Caco-2 (cell line): ENCODE measurements at regions of chr1 and their contacts with region 1.

Region 1: DNA sequence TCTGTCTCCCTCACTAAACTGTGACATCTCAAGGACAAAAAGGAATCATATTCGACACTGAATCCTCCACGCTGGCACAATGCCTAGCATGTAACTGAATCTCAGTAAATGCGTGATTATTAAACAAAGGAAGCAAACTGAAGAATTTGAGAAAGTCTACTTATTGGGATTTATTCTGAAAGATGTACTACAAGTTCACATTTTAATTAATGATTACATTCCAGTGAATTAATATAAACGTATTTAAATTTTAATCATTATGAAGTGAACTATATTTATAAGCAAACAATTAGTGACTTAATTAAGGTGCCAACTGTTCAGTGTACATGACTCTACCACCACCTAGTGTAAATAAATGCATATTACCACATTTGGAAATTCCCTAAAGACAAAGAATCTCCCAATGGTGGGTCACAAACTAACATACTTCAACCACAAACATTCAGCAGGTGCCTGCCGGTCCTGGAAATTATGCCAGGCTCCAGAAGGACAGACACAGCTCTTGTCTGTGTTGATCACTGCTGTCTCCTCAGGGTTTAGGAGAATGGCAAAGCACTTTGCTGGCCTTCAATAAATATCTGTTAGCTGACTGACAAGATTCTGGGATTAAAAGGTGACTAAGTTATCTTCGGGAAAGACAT is 56.3 kb downstream of the SMYD3 start:
- DNase-seq: peak in 1 of 2 experiments; percentile 2
- H3K4me3 ChIP-seq: no peak overlapping the region
- H3K4me3 Mint-ChIP-seq: no peak overlapping the region
- H3K27ac Mint-ChIP-seq: no peak overlapping the region
- H3K4me1 ChIP-seq: 0 out of 2 replicates have a peak, but pooled peaks cover 7% of the 10 kb centered on the region
- H3K4me1 Mint-ChIP-seq: peaks cover 6% of the 10 kb centered on the region
- H3K27me3 ChIP-seq: no peaks in the 10 kb centered on the region
- H3K27me3 Mint-ChIP-seq: no peaks in the 10 kb centered on the region
- CTCF ChIP-seq: peak; percentile 40 to 71

Region 2: GRCh38 chr1:246012341-246012740 is 438.4 kb before region 1 on chr1:
- CTCF ChIA-PET with region 1: no interaction called
- POLR2A ChIA-PET with region 1: no interaction called
- intact Hi-C with region 1: loop called (anchors 1 kb)
- DNase-seq: peak in 1 of 2 experiments; percentile 35
- H3K4me3 ChIP-seq: no peak overlapping the region
- H3K4me3 Mint-ChIP-seq: no peak overlapping the region
- H3K27ac Mint-ChIP-seq: no peak overlapping the region
- H3K4me1 ChIP-seq: no peaks in the 10 kb centered on the region
- H3K4me1 Mint-ChIP-seq: no peaks in the 10 kb centered on the region
- H3K27me3 ChIP-seq: no peaks in the 10 kb centered on the region
- H3K27me3 Mint-ChIP-seq: no peaks in the 10 kb centered on the region
- CTCF ChIP-seq: peak; percentile 55 to 61

Region 3: GRCh38 chr1:246117066-246117791 is 333.5 kb before region 1 on chr1:
- CTCF ChIA-PET with region 1: no interaction called
- POLR2A ChIA-PET with region 1: no interaction called
- intact Hi-C with region 1: loop called (anchors 10 kb)
- DNase-seq: peak; percentile 36 to 49
- H3K4me3 ChIP-seq: no peak overlapping the region
- H3K4me3 Mint-ChIP-seq: no peak overlapping the region
- H3K27ac Mint-ChIP-seq: no peak overlapping the region
- H3K4me1 ChIP-seq: peaks cover 15% of the 10 kb centered on the region
- H3K4me1 Mint-ChIP-seq: peaks cover 24% of the 10 kb centered on the region
- H3K27me3 ChIP-seq: no peaks in the 10 kb centered on the region
- H3K27me3 Mint-ChIP-seq: no peaks in the 10 kb centered on the region
- CTCF ChIP-seq: peak; percentile 32 to 62

Region 4: DNA sequence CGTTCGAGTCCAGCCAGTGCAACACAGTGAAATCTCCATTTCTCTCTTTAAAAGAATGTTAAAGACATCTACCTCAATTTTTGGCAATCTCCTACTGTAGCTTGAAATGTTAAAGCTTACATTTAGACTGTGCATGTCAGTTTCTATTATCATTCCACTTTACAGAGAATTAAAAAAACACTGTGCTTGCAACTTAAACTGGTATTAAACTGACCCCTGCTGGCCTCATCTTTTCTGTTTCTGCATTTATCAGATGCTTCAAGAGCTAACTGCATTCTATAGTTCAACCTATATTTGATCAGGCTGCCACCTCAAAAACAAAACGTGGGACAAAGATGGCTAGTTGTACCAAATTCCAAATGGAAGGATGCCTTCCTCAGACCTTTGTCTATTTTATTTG is 170.2 kb before region 1 on chr1:
- CTCF ChIA-PET with region 1: no interaction called
- POLR2A ChIA-PET with region 1: no interaction called
- intact Hi-C with region 1: loop called (anchors 1 kb)
- DNase-seq: peak in 1 of 2 experiments; percentile 5
- H3K4me3 ChIP-seq: no peak overlapping the region
- H3K4me3 Mint-ChIP-seq: no peak overlapping the region
- H3K27ac Mint-ChIP-seq: no peak overlapping the region
- H3K4me1 ChIP-seq: peaks cover 5% of the 10 kb centered on the region
- H3K4me1 Mint-ChIP-seq: no peaks in the 10 kb centered on the region
- H3K27me3 ChIP-seq: no peaks in the 10 kb centered on the region
- H3K27me3 Mint-ChIP-seq: no peaks in the 10 kb centered on the region
- CTCF ChIP-seq: peak in 1 of 2 experiments; percentile 6

Region 5: GRCh38 chr1:246338546-246338945 is 112.2 kb before region 1 on chr1:
- CTCF ChIA-PET with region 1: no interaction called
- POLR2A ChIA-PET with region 1: no interaction called
- intact Hi-C with region 1: no loop called
- DNase-seq: no peak
- H3K4me3 ChIP-seq: no peak overlapping the region
- H3K4me3 Mint-ChIP-seq: no peak overlapping the region
- H3K27ac Mint-ChIP-seq: no peak overlapping the region
- H3K4me1 ChIP-seq: no peaks in the 10 kb centered on the region
- H3K4me1 Mint-ChIP-seq: no peaks in the 10 kb centered on the region
- H3K27me3 ChIP-seq: no peaks in the 10 kb centered on the region
- H3K27me3 Mint-ChIP-seq: no peaks in the 10 kb centered on the region
- CTCF ChIP-seq: no peak

Region 6: DNA sequence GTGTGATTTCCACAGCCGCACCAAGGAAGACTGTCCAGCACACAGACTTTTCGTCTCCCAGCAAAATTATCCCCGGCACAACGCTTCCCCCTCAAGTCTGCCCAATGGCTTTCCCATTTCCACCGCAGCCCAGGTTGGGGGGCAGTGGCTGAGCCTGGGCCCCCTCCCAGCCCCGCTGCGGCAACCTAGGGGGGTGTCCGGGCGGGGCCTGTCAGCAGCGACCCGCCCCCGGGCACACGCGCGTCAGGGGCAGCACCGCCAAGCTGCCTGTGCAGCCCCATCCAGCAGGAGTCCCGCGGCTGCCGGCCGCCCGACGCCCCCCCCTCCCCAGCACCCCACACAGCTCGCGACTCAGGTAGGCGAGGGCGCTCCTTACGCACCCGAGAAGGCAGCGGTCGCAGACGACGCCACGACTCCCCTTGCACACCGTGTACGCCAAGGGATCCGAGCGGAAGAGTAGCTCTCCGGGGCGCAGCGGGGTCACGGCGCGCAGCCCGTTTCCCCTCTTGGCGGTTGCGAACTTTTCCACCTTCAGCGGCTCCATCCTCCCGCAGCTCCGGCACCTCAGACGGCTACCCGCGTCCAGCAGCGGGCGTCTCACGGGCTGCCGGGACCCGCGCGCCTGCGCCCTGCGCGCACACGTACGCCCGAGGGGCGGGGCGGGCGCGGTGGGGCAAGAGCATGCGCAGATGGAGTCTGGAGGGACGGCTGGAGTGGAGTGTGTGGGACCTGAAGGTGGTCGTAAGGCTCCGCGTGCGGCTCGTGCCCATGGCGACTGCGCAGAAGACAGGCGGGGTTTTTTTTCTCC is 56.1 kb after region 1 on chr1 and contains the start of gene SMYD3:
- CTCF ChIA-PET with region 1: no interaction called
- POLR2A ChIA-PET with region 1: no interaction called
- intact Hi-C with region 1: no loop called
- DNase-seq: peak; percentile 72 to 80
- H3K4me3 ChIP-seq: peak within 1 kb of the TSS; percentile 98
- H3K4me3 Mint-ChIP-seq: peak within 1 kb of the TSS; percentile 95
- H3K27ac Mint-ChIP-seq: peak within 1 kb of the TSS; percentile 71
- H3K4me1 ChIP-seq: peaks cover 5% of the 10 kb centered on the region
- H3K4me1 Mint-ChIP-seq: peaks cover 9% of the 10 kb centered on the region
- H3K27me3 ChIP-seq: no peaks in the 10 kb centered on the region
- H3K27me3 Mint-ChIP-seq: no peaks in the 10 kb centered on the region
- CTCF ChIP-seq: peak in 1 of 2 experiments; percentile 24
- total RNA-seq, gene SMYD3: 33.0 and 37.7 TPM in 2 replicates